CD4-positive, alpha-beta memory T cell (primary cell): ENCODE measurements at regions of chr10 and their contacts with region 1.

Region 1: GRCh38 chr10:22988581-22989360 is 60.9 kb downstream of the ARMC3 start:
- DNase-seq: peak; percentile 71 to 79 (median 77)
- H3K4me3 ChIP-seq: no peak overlapping the region
- H3K4me3 Mint-ChIP-seq: no peak overlapping the region
- H3K27ac ChIP-seq: no peak overlapping the region
- H3K27ac Mint-ChIP-seq: peak overlapping the region in 3 of 7 donors; percentile 6 to 68 (median 43)
- H3K4me1 ChIP-seq: peaks cover 13% of the 10 kb centered on the region
- H3K4me1 Mint-ChIP-seq: peaks cover 4 to 10% (median 9%) of the 10 kb centered on the region in 4 donors
- H3K27me3 ChIP-seq: no peaks in the 10 kb centered on the region
- H3K27me3 Mint-ChIP-seq: peaks cover 4 to 5% of the 10 kb centered on the region in 2 donors

Region 2: DNA sequence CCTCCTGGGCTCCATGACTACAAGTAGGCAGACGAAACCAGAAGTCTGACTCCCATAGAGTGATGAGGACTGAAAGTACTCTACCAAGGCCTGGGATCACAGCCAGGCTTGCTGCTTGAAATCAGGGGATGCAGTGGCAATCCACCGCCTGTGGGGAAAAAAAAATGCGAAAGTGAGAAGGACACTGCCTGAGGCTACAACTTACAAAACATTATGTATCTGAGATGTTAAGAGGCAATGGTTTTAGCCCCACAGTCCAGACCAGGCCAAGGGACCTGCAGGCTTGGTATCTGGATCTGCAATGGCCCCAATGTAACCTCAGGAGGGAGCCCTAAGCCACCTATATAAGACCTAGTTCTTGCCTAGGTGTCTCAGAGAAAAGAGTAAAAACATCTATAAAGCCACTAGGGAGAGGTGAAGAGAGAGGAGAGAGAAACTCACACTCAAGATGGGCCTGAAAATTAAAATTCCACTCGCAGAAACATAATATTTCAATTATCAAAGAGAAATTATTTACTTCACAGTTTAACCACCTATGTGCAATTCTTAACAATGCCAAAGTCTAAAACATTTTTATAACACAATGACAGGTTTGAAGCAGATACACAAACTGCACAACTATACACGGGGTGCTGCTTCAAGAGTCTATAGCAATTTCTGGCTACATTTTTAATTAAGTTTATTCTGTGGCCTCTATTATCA is 999.2 kb before region 1 on chr10:
- CTCF ChIA-PET with region 1: interaction called, 67 read pairs
- POLR2A ChIA-PET with region 1: interaction called, 3 read pairs
- intact Hi-C with region 1: loop called (anchors 1 kb)
- DNase-seq: peak in 4 of 5 donors; percentile 13 to 33 (median 24)
- H3K4me3 ChIP-seq: no peak overlapping the region
- H3K4me3 Mint-ChIP-seq: no peak overlapping the region
- H3K27ac ChIP-seq: no peak overlapping the region
- H3K27ac Mint-ChIP-seq: peak overlapping the region in 2 of 7 donors; percentile 52 to 94
- H3K4me1 ChIP-seq: peaks cover 5% of the 10 kb centered on the region
- H3K4me1 Mint-ChIP-seq: peaks cover 6 to 12% (median 10%) of the 10 kb centered on the region in 4 donors
- H3K27me3 ChIP-seq: no peaks in the 10 kb centered on the region
- H3K27me3 Mint-ChIP-seq: no peaks in the 10 kb centered on the region

Region 3: DNA sequence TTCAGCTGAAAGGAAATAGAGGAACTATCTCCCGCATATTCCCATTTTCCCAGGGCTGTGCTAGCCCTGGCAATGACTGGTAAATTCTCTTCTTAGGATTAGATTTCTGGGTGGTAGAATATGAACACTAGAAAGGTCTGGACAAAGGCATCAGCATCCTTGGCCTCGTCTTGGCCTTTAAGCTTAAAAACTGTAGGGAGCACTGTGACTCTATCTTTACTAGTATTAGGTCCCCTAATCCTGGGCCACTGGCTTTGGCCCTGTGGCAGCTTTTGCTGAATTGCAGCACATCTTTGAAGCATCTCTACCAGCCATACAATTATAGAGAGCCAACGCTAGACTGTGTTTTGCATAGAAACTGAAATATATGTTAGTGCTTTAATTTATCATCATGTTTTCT is 729.5 kb before region 1 on chr10:
- CTCF ChIA-PET with region 1: interaction called, 17 read pairs
- POLR2A ChIA-PET with region 1: no interaction called
- intact Hi-C with region 1: loop called (anchors 1 kb)
- DNase-seq: peak in 3 of 5 donors; percentile 15 to 26 (median 21)
- H3K4me3 ChIP-seq: no peak overlapping the region
- H3K4me3 Mint-ChIP-seq: no peak overlapping the region
- H3K27ac ChIP-seq: no peak overlapping the region
- H3K27ac Mint-ChIP-seq: peak overlapping the region in 2 of 7 donors; percentile 7 to 43
- H3K4me1 ChIP-seq: peaks cover 15% of the 10 kb centered on the region
- H3K4me1 Mint-ChIP-seq: peaks cover 6 to 33% (median 20%) of the 10 kb centered on the region in 4 donors
- H3K27me3 ChIP-seq: no peaks in the 10 kb centered on the region
- H3K27me3 Mint-ChIP-seq: peaks cover 0 to 3% of the 10 kb centered on the region in 2 donors

Region 4: GRCh38 chr10:22550732-22551131 is 438.0 kb before region 1 on chr10:
- CTCF ChIA-PET with region 1: interaction called, 27 read pairs
- POLR2A ChIA-PET with region 1: no interaction called
- intact Hi-C with region 1: loop called (anchors 1 kb)
- DNase-seq: peak; percentile 54 to 66 (median 59)
- H3K4me3 ChIP-seq: no peak overlapping the region
- H3K4me3 Mint-ChIP-seq: no peak overlapping the region
- H3K27ac ChIP-seq: no peak overlapping the region
- H3K27ac Mint-ChIP-seq: peak overlapping the region in 4 of 7 donors; percentile 2 to 86 (median 42)
- H3K4me1 ChIP-seq: no peaks in the 10 kb centered on the region
- H3K4me1 Mint-ChIP-seq: peaks cover 12 to 15% (median 13%) of the 10 kb centered on the region in 4 donors
- H3K27me3 ChIP-seq: no peaks in the 10 kb centered on the region
- H3K27me3 Mint-ChIP-seq: no peaks in the 10 kb centered on the region

Region 5: DNA sequence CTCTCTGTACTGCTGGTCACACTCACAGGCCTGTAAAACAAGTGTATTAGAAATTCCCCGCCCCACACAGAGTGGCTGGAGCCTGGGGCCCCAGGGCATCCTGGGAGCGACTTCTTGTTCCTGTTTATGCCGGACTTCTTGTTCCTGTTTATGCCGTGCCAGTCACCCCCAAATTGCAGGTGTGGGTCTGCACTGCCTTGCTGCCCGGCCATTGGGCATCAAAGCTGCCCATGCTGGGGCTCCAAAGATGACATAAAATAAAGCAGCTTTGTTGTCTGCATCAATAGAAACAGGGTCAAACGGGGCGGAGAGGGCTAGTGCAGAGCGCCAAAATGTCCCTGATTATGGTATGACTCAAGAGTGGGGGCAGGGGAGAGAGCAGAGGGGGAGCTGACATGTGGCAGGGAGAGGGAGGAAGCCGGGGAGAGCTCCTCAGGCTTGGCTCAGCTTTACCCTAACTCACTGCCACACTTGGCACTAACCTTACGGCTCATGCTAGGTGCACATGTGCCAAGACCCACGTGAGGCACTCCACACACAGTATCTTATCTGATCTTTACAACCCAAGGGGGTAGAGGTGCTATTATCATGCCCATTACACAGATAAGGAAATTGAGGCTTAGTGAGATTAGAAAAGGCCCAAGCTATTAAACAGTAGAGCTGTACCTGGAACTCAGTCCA is 372.8 kb before region 1 on chr10:
- CTCF ChIA-PET with region 1: interaction called, 4 read pairs
- POLR2A ChIA-PET with region 1: interaction called, 3 read pairs
- intact Hi-C with region 1: loop called (anchors 1 kb)
- DNase-seq: peak in 4 of 5 donors; percentile 32 to 81 (median 44)
- H3K4me3 ChIP-seq: peak overlapping the region; percentile 2 to 6
- H3K4me3 Mint-ChIP-seq: peak overlapping the region; percentile 53 to 85 (median 75)
- H3K27ac ChIP-seq: peak overlapping the region; percentile 53
- H3K27ac Mint-ChIP-seq: peak overlapping the region; percentile 87 to 98 (median 95)
- H3K4me1 ChIP-seq: peaks cover 97% of the 10 kb centered on the region
- H3K4me1 Mint-ChIP-seq: peaks cover 78 to 100% (median 91%) of the 10 kb centered on the region in 4 donors
- H3K27me3 ChIP-seq: no peaks in the 10 kb centered on the region
- H3K27me3 Mint-ChIP-seq: no peaks in the 10 kb centered on the region

Region 6: GRCh38 chr10:23015021-23015707 is 26.4 kb after region 1 on chr10:
- CTCF ChIA-PET with region 1: no interaction called
- POLR2A ChIA-PET with region 1: no interaction called
- intact Hi-C with region 1: no loop called
- DNase-seq: no peak
- H3K4me3 ChIP-seq: no peak overlapping the region
- H3K4me3 Mint-ChIP-seq: no peak overlapping the region
- H3K27ac ChIP-seq: no peak overlapping the region
- H3K27ac Mint-ChIP-seq: no peak overlapping the region
- H3K4me1 ChIP-seq: no peaks in the 10 kb centered on the region
- H3K4me1 Mint-ChIP-seq: no peaks in the 10 kb centered on the region
- H3K27me3 ChIP-seq: no peaks in the 10 kb centered on the region
- H3K27me3 Mint-ChIP-seq: peaks cover 12 to 22% of the 10 kb centered on the region in 2 donors